GM12878 (cell line): ENCODE measurements at regions of chr6 and their contacts with region 1.

Region 1: GRCh38 chr6:158999666-159000403 is at the start of gene RSPH3:
- DNase-seq: peak; percentile 77
- ATAC-seq: peak; percentile 96
- H3K4me3 ChIP-seq: peak within 1 kb of the TSS; percentile 81
- H3K27ac ChIP-seq: peak within 1 kb of the TSS; percentile 87
- H3K4me1 ChIP-seq: peaks cover 3% of the 10 kb centered on the region; the same call in 1 of the 2 replicates
- H3K27me3 ChIP-seq: no peaks in the 10 kb centered on the region
- CTCF ChIP-seq: peak in 1 of 3 experiments; percentile 34; a peak in 2 of 6 replicates
- EP300 ChIP-seq: no peak
- POLR2A ChIP-seq: peak; percentile 98
- RAD21 ChIP-seq: peak; percentile 21; the same call in 1 of the 2 replicates
- polyA plus RNA-seq, gene RSPH3: 0.40 to 0.51 TPM

Region 2: GRCh38 chr6:158958504-158959386 is 41.1 kb before region 1 on chr6:
- CTCF ChIA-PET with region 1: no interaction called
- POLR2A ChIA-PET with region 1: no interaction called
- RAD21 ChIA-PET with region 1: no interaction called
- SMC1A ChIA-PET with region 1: no interaction called
- in situ Hi-C with region 1: no loop called
- intact Hi-C with region 1: no loop called
- DNase-seq: no peak
- ATAC-seq: peak; percentile 86
- H3K4me3 ChIP-seq: no peak overlapping the region
- H3K27ac ChIP-seq: no peak overlapping the region
- H3K4me1 ChIP-seq: no peaks in the 10 kb centered on the region
- H3K27me3 ChIP-seq: no peaks in the 10 kb centered on the region
- CTCF ChIP-seq: peak; percentile 28 to 46 (median 36); a peak in 4 of 6 replicates
- EP300 ChIP-seq: no peak
- POLR2A ChIP-seq: no peak
- RAD21 ChIP-seq: peak; percentile 54

Region 3: DNA sequence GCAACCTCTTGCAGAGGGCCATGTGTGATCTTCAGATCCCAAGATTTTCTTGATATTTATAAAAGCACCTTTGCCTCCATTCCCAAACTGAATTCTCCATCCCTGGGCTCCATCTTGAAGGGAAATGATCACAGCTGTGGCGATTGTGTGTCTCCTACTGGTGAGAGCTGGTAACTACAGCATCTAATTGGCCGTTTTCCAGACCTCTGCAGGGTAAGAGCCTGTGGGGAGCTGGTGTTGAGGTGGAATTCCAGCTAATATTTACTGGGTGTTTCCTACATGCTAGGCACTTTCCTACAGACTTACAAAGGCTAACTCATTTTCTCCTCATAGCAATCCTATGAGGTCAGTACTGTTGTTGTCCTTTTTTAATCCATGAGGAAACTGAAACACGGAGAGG is 110.2 kb after region 1 on chr6:
- CTCF ChIA-PET with region 1: interaction called, 631 read pairs
- POLR2A ChIA-PET with region 1: interaction called, 19 read pairs
- RAD21 ChIA-PET with region 1: interaction called, 12 read pairs
- SMC1A ChIA-PET with region 1: interaction called, 517 read pairs
- in situ Hi-C with region 1: loop called (anchors 5 kb)
- intact Hi-C with region 1: loop called (anchors 2 kb)
- DNase-seq: no peak
- ATAC-seq: no peak
- H3K4me3 ChIP-seq: no peak overlapping the region
- H3K27ac ChIP-seq: no peak overlapping the region
- H3K4me1 ChIP-seq: peaks cover 36% of the 10 kb centered on the region
- H3K27me3 ChIP-seq: peaks cover 0 to 3% of the 10 kb centered on the region in 2 experiments; a peak in 1 of 4 replicates
- CTCF ChIP-seq: peak; percentile 66 to 88 (median 77)
- EP300 ChIP-seq: no peak
- POLR2A ChIP-seq: no peak
- RAD21 ChIP-seq: peak; percentile 82

Region 4: DNA sequence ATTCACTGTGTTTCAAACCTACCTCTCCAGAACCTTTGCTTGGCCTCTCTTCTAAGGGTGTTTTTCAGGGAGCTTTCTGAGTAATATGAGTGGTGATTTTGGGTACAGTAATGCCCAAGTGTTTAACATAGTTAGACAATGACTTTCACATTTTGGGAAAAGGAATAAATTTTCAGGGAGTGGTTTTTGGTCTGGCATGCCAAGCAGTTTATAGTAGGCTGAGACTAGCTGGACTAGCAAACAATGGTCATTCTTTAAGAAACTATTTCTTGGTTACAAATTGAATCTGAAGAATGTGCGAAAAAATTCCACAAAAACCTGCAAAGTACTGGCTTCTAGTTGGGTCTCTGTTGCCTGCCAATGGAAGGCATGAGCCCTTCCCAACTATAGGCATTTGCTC is 184.7 kb after region 1 on chr6:
- CTCF ChIA-PET with region 1: no interaction called
- POLR2A ChIA-PET with region 1: no interaction called
- RAD21 ChIA-PET with region 1: no interaction called
- SMC1A ChIA-PET with region 1: no interaction called
- in situ Hi-C with region 1: no loop called
- intact Hi-C with region 1: no loop called
- DNase-seq: no peak
- ATAC-seq: no peak
- H3K4me3 ChIP-seq: no peak overlapping the region
- H3K27ac ChIP-seq: no peak overlapping the region
- H3K4me1 ChIP-seq: no peaks in the 10 kb centered on the region
- H3K27me3 ChIP-seq: peaks cover 0 to 2% of the 10 kb centered on the region in 2 experiments; a peak in 1 of 4 replicates
- CTCF ChIP-seq: no peak
- EP300 ChIP-seq: no peak
- POLR2A ChIP-seq: no peak
- RAD21 ChIP-seq: no peak

Region 5: GRCh38 chr6:159463119-159463829 is 463.4 kb after region 1 on chr6:
- CTCF ChIA-PET with region 1: no interaction called
- POLR2A ChIA-PET with region 1: no interaction called
- RAD21 ChIA-PET with region 1: no interaction called
- SMC1A ChIA-PET with region 1: no interaction called
- in situ Hi-C with region 1: loop called (anchors 25 kb)
- intact Hi-C with region 1: no loop called
- DNase-seq: no peak
- ATAC-seq: no peak
- H3K4me3 ChIP-seq: no peak overlapping the region
- H3K27ac ChIP-seq: no peak overlapping the region
- H3K4me1 ChIP-seq: peaks cover 16% of the 10 kb centered on the region
- H3K27me3 ChIP-seq: no peaks in the 10 kb centered on the region
- CTCF ChIP-seq: peak in 2 of 3 experiments; percentile 9 to 30; a peak in 1 of 6 replicates
- EP300 ChIP-seq: no peak
- POLR2A ChIP-seq: no peak
- RAD21 ChIP-seq: peak; percentile 21; the same call in 1 of the 2 replicates